ENCODE measurements at regions of chr1 and their contacts with region 1.

Region 1: GRCh38 chr1:115595279-115596079 is 46.3 kb upstream of the VANGL1 start:
- DNase-seq: peak; percentile 90
- H3K4me3 ChIP-seq: no peak overlapping the region
- H3K27ac ChIP-seq: no peak overlapping the region
- H3K27me3 ChIP-seq: peaks cover 2% of the 10 kb centered on the region
- CTCF ChIP-seq: peak; percentile 98

Region 2: DNA sequence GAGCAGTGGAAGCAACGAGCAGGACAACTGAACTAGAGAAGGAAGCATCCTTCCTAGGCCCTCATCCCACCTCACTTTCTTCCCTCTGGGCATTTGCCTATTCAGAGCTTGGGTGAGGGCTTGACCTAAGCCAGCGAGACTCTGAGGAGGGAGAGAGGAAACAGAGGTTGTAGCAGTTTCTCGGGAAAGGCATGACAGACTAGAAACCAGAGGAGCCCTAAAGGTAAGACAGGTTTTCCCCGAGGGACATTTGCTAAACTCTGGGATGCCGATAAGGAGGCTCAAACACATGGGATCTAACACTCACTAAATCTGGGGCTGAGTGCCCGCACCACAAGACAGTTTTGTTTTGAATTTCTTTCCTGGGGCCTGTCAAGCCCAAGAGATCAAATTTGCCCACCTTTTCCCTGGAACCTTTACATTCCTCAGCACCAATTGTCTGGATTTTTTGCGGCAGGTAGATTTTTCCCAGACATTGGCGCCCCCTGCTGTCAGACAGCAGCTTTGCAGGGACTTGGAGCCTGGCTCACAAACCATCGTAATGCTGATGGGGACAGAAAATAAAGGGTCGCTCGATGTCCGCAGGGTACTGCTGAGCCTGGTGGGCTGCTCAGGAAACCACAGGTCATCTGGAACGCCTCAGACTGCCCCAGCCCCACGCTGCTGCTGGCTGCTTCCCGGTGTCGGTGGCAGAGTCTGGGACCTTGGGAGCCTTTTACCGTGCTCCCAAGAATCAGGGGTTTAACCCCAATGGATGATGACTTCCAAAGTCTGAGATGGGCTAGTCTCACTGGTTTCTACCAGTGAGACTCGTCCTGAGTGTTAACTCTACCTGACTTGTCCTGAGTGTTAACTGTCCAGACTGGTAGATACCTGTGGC is 482.7 kb before region 1 on chr1:
- CTCF ChIA-PET with region 1: interaction called, 41 read pairs
- POLR2A ChIA-PET with region 1: no interaction called
- DNase-seq: no peak
- H3K4me3 ChIP-seq: no peak overlapping the region
- H3K27ac ChIP-seq: no peak overlapping the region
- H3K27me3 ChIP-seq: no peaks in the 10 kb centered on the region
- CTCF ChIP-seq: peak; percentile 93

Region 3: GRCh38 chr1:115138968-115139367 is 456.5 kb before region 1 on chr1:
- CTCF ChIA-PET with region 1: interaction called, 338 read pairs
- POLR2A ChIA-PET with region 1: interaction called, 3 read pairs
- DNase-seq: peak; percentile 84
- H3K4me3 ChIP-seq: no peak overlapping the region
- H3K27ac ChIP-seq: no peak overlapping the region
- H3K27me3 ChIP-seq: no peaks in the 10 kb centered on the region
- CTCF ChIP-seq: peak; percentile 97

Region 4: GRCh38 chr1:115426231-115426771 is 169.2 kb before region 1 on chr1:
- CTCF ChIA-PET with region 1: interaction called, 11 read pairs
- POLR2A ChIA-PET with region 1: no interaction called
- DNase-seq: no peak
- H3K4me3 ChIP-seq: no peak overlapping the region
- H3K27ac ChIP-seq: peak overlapping the region; percentile 76
- H3K27me3 ChIP-seq: no peaks in the 10 kb centered on the region
- CTCF ChIP-seq: no peak

Region 5: GRCh38 chr1:115506926-115507589 is 88.4 kb before region 1 on chr1:
- CTCF ChIA-PET with region 1: interaction called, 10 read pairs
- POLR2A ChIA-PET with region 1: no interaction called
- DNase-seq: no peak
- H3K4me3 ChIP-seq: no peak overlapping the region
- H3K27ac ChIP-seq: no peak overlapping the region
- H3K27me3 ChIP-seq: no peaks in the 10 kb centered on the region
- CTCF ChIP-seq: peak; percentile 72

Region 6: DNA sequence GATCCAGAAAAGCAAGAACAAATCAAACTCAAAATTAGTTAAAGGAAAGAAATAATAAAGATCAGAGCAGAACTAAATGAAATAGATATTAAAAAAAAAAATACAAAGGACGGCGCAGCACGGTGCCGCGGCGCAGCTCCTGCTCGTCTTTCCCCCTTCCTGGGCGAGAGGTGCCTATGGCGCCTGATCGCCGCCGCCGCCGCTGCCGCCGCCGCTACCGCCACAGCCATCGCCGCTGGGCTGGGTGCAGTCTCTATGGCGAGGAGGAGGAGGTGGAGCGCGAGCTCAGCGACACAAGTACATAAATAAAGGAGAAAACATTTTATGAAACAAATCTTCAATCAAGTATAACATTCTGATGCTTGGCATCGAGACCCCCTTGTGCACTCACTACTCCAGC is 31.3 kb before region 1 on chr1:
- CTCF ChIA-PET with region 1: interaction called, 14 read pairs
- POLR2A ChIA-PET with region 1: no interaction called
- DNase-seq: no peak
- H3K4me3 ChIP-seq: peak overlapping the region; percentile 21; the same call in 1 of the 2 replicates
- H3K27ac ChIP-seq: no peak overlapping the region
- H3K27me3 ChIP-seq: peaks cover 6% of the 10 kb centered on the region
- CTCF ChIP-seq: no peak

Region 7: DNA sequence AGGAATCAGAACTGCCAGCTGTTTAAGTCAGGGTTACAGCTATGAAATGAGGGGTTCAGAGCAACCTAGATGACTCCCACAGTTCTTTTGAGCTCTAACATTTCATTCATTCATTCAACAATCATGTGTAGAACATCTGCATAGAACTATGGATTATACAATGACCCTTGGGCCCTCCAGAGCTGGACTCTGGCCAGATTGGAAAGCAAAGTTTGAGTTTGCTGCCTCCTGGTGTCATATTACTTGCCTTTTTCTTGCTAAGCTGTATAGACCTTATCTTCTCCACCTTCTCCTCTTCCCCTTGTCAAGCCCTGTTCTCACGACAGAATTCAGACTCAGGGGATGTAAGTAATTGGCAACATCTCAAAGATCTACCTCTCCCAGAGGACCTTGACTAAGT is 169.1 kb after region 1 on chr1:
- CTCF ChIA-PET with region 1: interaction called, 11 read pairs
- POLR2A ChIA-PET with region 1: no interaction called
- DNase-seq: no peak
- H3K4me3 ChIP-seq: no peak overlapping the region
- H3K27ac ChIP-seq: no peak overlapping the region
- H3K27me3 ChIP-seq: peaks cover 10% of the 10 kb centered on the region
- CTCF ChIP-seq: peak; percentile 52